Left cardiac atrium (tissue), 4 donors: ENCODE measurements at regions of chr7 and their contacts with region 1.

Region 1: DNA sequence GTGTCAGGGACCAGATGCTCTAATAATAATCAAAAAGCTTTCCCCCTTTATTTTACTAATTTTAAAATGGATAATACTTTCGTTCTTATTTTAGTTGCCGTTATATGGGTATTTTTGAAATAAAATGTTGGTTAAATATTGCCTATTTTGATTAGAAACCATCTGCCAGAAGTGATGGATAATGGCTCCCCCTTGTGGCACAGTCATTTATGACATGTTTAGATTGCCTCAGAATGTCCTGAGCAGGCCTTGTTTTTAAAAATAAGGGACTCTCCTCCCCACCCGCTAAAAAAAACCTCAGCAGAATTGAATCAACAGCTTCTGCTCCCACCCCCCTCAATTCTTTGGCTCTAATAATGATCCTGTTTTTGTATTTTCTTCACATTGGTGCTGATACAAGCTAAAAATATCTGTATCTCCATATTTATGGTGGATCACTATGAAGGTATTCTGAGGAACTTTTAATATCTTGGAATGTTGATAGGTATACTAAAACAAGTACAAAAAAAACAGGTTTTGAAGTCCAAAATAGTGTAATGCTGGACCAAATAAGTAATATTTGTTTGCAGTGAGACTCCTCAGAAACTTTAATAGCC is 38.8 kb downstream of the TMEM60 start:
- DNase-seq: peak; percentile 39
- ATAC-seq: peak; percentile 71

Region 2: DNA sequence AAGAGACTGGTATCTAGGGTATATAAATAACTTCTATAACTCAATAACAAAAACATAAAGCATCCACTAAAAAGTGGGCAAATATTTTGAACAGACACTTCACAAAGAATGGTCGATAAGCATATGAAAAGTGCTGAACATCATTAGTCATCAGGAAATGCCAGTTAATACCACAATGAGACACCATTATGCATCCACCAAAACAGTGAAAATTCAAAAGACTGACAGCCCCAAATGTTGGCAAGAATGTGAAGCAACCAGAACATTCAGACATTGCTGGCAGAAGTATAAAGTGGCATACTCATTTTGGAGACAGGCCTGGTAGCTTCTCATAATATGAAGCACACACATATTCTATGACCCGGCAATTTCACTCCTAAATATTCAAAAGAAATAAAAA is 316.8 kb before region 1 on chr7:
- intact Hi-C with region 1: loop called in 1 of 2 experiments (anchors 5 kb)
- DNase-seq: no peak
- ATAC-seq: no peak

Region 3: GRCh38 chr7:77651573-77652162 is 107.7 kb before region 1 on chr7:
- intact Hi-C with region 1: loop called (anchors 2 to 10 kb)
- DNase-seq: no peak
- ATAC-seq: no peak

Region 4: GRCh38 chr7:77657427-77658224 is 101.8 kb before region 1 on chr7:
- intact Hi-C with region 1: loop called (anchors 2 to 10 kb)
- DNase-seq: no peak
- ATAC-seq: peak in 1 of 2 donors; percentile 35